Endothelial cell of umbilical vein (primary cell): ENCODE measurements at regions of chr12 and their contacts with region 1.

Region 1: GRCh38 chr12:22544038-22544979 is at the start of gene C2CD5:
- DNase-seq: peak; percentile 97
- H3K4me3 ChIP-seq: peak within 1 kb of the TSS; percentile 56 to 73 (median 67)
- H3K27ac ChIP-seq: peak within 1 kb of the TSS; percentile 79
- H3K4me1 ChIP-seq: peaks cover 13% of the 10 kb centered on the region
- H3K27me3 ChIP-seq: no peaks in the 10 kb centered on the region
- CTCF ChIP-seq: peak in 1 of 2 donors; percentile 44
- POLR2A ChIP-seq: peak; percentile 66
- total RNA-seq, gene C2CD5: 29.3 and 32.9 TPM in 2 replicates

Region 2: DNA sequence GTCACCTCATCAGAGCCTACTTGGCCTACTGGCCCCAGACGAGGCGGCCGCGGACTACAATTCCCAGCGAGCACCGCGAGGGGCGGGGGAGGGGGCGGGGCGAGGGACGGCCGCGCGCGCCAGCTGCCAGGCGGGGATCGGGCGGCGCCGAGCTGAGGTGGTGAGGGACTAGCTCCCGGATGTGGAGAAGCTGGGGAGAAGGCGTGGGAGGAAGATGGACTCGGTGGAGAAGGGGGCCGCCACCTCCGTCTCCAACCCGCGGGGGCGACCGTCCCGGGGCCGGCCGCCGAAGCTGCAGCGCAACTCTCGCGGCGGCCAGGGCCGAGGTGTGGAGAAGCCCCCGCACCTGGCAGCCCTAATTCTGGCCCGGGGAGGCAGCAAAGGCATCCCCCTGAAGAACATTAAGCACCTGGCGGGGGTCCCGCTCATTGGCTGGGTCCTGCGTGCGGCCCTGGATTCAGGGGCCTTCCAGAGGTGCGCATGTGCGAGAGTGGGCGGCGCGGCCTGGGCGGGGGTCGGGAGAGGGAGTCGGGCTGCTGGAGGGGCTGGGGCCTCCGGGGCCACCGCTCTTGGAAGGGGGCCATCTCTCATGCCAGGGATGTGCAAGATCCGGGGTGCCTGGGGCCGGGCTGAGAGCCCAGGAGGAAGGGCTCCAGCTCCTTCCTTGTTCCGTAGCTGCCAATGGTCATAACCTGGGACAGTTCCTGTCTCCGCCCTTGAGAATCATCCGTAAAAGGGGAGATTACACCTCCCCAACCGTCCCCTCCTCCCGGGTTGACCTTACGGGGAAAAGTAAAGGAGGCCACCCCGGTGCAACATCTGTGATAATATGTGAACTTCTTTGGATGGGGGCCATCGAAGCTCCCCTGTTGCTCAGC is 498.0 kb before region 1 on chr12 and contains the start of gene CMAS:
- CTCF ChIA-PET with region 1: no interaction called
- POLR2A ChIA-PET with region 1: no interaction called
- dilution Hi-C with region 1: no loop called
- intact Hi-C with region 1: loop called (anchors 5 kb)
- DNase-seq: peak; percentile 56
- H3K4me3 ChIP-seq: peak within 1 kb of the TSS; percentile 90 to 92 (median 92)
- H3K27ac ChIP-seq: peak within 1 kb of the TSS; percentile 69
- H3K4me1 ChIP-seq: peaks cover 12% of the 10 kb centered on the region
- H3K27me3 ChIP-seq: no peaks in the 10 kb centered on the region
- CTCF ChIP-seq: no peak
- POLR2A ChIP-seq: peak; percentile 73
- total RNA-seq, gene CMAS: 34.4 and 35.4 TPM in 2 replicates

Region 3: DNA sequence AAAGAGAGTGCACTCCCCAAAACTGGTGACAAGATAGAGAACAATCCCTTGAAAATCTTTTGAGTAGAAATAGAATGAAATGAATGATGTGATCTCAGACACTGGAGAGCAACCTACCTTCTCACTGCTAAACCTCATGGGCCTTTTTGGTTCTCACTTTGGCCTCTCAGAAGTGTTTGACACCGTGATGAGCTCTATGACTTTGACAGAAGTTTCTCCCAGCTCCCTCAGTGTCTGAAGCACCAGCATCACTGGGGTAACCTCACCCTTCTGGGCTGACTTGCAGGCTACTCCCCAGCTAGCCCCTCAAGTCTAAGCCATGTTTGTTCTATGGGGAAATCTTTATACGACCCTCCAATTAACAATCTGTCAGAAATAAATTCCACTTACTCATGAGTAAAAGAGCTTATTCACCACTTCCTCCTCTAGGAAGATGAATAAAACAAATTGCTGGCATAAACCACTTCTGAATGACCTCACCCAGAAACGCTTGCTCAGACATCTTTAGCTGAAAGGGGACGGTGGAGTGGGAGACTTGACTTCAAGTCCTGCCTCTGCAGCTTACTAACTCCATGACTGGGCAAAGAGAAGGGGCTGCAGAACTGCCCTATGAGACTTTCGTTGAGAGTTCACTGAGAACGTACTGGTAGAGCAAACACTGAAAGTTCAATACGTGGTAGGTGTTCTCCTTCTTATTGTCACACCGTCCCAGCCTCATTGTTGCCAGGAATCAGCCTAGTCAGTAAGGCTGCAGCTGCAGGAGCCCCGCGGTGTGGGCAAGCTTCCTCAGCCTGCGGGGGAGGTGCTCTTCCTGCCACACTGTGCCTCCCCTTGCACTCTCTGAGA is 256.3 kb before region 1 on chr12:
- CTCF ChIA-PET with region 1: no interaction called
- POLR2A ChIA-PET with region 1: no interaction called
- dilution Hi-C with region 1: no loop called
- intact Hi-C with region 1: loop called (anchors 10 kb)
- DNase-seq: peak; percentile 60
- H3K4me3 ChIP-seq: no peak overlapping the region
- H3K27ac ChIP-seq: no peak overlapping the region
- H3K4me1 ChIP-seq: peaks cover 21% of the 10 kb centered on the region
- H3K27me3 ChIP-seq: no peaks in the 10 kb centered on the region
- CTCF ChIP-seq: no peak
- POLR2A ChIP-seq: no peak

Region 4: DNA sequence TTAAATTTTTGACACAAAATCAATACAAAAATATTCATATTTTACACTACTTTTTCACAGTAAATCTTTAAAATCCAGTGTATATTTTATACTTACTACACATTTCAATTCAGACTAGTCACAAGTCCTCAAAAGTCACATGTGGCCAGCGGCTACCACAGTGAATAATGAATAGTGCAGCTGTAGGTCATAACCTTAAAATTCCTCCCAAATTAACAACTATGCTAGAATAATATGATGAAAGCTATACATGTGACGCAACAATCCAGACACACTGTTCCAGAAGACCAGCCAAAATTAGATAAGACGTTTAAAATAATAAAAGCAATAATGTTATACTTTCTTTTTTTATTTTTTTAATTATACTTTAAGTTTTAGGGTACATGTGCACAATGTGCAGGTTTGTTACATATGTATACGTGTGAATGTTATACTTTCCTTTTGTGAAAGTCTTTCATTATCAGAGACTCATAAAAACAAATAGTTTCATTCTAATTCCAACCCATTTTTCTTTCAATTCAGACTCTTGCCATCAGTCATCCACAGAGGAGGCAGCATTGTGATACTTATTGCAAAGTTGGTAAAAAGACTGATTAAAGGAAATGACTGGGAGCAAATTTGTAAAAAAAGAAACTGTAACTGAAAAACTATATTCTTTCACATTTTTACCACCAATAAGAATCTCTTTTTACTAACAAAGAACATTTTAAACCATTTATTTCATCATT is 67.0 kb before region 1 on chr12:
- CTCF ChIA-PET with region 1: no interaction called
- POLR2A ChIA-PET with region 1: no interaction called
- dilution Hi-C with region 1: no loop called
- intact Hi-C with region 1: loop called (anchors 5 kb)
- DNase-seq: peak; percentile 51
- H3K4me3 ChIP-seq: no peak overlapping the region
- H3K27ac ChIP-seq: peak overlapping the region; percentile 34
- H3K4me1 ChIP-seq: peaks cover 11% of the 10 kb centered on the region
- H3K27me3 ChIP-seq: no peaks in the 10 kb centered on the region
- CTCF ChIP-seq: no peak
- POLR2A ChIP-seq: no peak

Region 5: GRCh38 chr12:22529281-22530060 is 14.8 kb before region 1 on chr12:
- CTCF ChIA-PET with region 1: interaction called, 23 read pairs
- POLR2A ChIA-PET with region 1: interaction called, 4 read pairs
- dilution Hi-C with region 1: no loop called
- intact Hi-C with region 1: loop called (anchors 1 kb)
- DNase-seq: peak; percentile 36
- H3K4me3 ChIP-seq: no peak overlapping the region
- H3K27ac ChIP-seq: peak overlapping the region; percentile 75
- H3K4me1 ChIP-seq: peaks cover 43% of the 10 kb centered on the region
- H3K27me3 ChIP-seq: no peaks in the 10 kb centered on the region
- CTCF ChIP-seq: peak in 1 of 2 donors; percentile 15
- POLR2A ChIP-seq: no peak

Region 6: GRCh38 chr12:22562036-22563028 is 18.0 kb after region 1 on chr12:
- CTCF ChIA-PET with region 1: no interaction called
- POLR2A ChIA-PET with region 1: no interaction called
- dilution Hi-C with region 1: no loop called
- intact Hi-C with region 1: no loop called
- DNase-seq: no peak
- H3K4me3 ChIP-seq: no peak overlapping the region
- H3K27ac ChIP-seq: no peak overlapping the region
- H3K4me1 ChIP-seq: no peaks in the 10 kb centered on the region
- H3K27me3 ChIP-seq: peaks cover 5 to 15% of the 10 kb centered on the region in 2 experiments
- CTCF ChIP-seq: no peak
- POLR2A ChIP-seq: no peak

Region 7: GRCh38 chr12:22610131-22610530 is 65.8 kb after region 1 on chr12:
- CTCF ChIA-PET with region 1: no interaction called
- POLR2A ChIA-PET with region 1: no interaction called
- dilution Hi-C with region 1: no loop called
- intact Hi-C with region 1: no loop called
- DNase-seq: no peak
- H3K4me3 ChIP-seq: no peak overlapping the region
- H3K27ac ChIP-seq: no peak overlapping the region
- H3K4me1 ChIP-seq: no peaks in the 10 kb centered on the region
- H3K27me3 ChIP-seq: no peaks in the 10 kb centered on the region
- CTCF ChIP-seq: no peak
- POLR2A ChIP-seq: no peak

Region 8: GRCh38 chr12:22624870-22625761 is 80.8 kb after region 1 on chr12 and contains the start of gene ETNK1:
- CTCF ChIA-PET with region 1: interaction called, 12 read pairs
- POLR2A ChIA-PET with region 1: interaction called, 10 read pairs
- dilution Hi-C with region 1: no loop called
- intact Hi-C with region 1: loop called (anchors 1 kb)
- DNase-seq: peak; percentile 94
- H3K4me3 ChIP-seq: peak within 1 kb of the TSS; percentile 81 to 96 (median 92)
- H3K27ac ChIP-seq: peak within 1 kb of the TSS; percentile 72
- H3K4me1 ChIP-seq: peaks cover 29% of the 10 kb centered on the region
- H3K27me3 ChIP-seq: peaks cover under 1 to 2% of the 10 kb centered on the region in 2 experiments
- CTCF ChIP-seq: no peak
- POLR2A ChIP-seq: peak; percentile 92
- total RNA-seq, gene ETNK1: 63.8 and 68.4 TPM in 2 replicates

Region 9: DNA sequence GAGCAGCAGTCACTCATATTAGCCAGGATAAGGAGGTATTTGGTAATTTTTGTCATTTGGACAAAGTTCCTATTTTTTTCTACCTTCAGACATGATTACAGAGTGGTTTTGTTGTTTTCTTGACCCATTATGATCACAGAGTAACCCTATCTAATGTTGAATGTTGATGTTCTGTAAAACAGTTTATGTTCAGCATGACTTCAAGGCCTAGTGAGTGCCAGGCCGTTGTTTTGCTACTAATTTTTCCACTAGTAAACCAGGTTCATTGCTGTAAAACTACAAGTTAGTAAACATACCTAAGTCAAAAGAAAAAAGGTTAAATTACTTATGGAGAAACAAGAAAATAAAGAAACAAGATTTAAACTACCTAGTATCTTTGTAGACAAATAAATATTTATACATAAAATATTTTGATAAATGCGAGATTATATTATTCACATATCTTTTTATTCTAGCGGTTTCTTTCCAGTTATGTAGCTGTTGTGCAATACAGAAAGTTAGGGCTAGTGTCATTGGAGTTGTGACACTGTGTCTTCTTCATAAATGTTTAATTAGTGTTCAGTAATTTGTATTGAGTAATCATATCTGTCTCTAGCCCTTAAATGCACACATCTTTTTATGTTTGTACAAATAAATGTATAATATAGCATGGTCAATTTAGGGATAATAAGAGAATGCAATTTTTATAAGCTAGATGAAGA is 97.2 kb after region 1 on chr12:
- CTCF ChIA-PET with region 1: no interaction called
- POLR2A ChIA-PET with region 1: no interaction called
- dilution Hi-C with region 1: no loop called
- intact Hi-C with region 1: no loop called
- DNase-seq: no peak
- H3K4me3 ChIP-seq: no peak overlapping the region
- H3K27ac ChIP-seq: no peak overlapping the region
- H3K4me1 ChIP-seq: no peaks in the 10 kb centered on the region
- H3K27me3 ChIP-seq: no peaks in the 10 kb centered on the region
- CTCF ChIP-seq: no peak
- POLR2A ChIP-seq: no peak